CD4-positive, alpha-beta T cell (primary cell): ENCODE measurements at regions of chr13 and their contacts with region 1.

Region 1: GRCh38 chr13:36818804-36819738 is at the start of gene RFXAP:
- DNase-seq: peak; percentile 83 to 96 (median 90)
- ATAC-seq: peak; percentile 89
- H3K4me3 ChIP-seq: peak within 1 kb of the TSS; percentile 83
- H3K4me3 Mint-ChIP-seq: peak within 1 kb of the TSS; percentile 89
- H3K27ac ChIP-seq: peak within 1 kb of the TSS; percentile 38 to 53
- H3K27ac Mint-ChIP-seq: peak within 1 kb of the TSS; percentile 90
- H3K4me1 ChIP-seq: peaks cover 29% of the 10 kb centered on the region
- H3K4me1 Mint-ChIP-seq: peaks cover 56% of the 10 kb centered on the region
- H3K27me3 ChIP-seq: no peaks in the 10 kb centered on the region
- H3K27me3 Mint-ChIP-seq: peaks cover 7% of the 10 kb centered on the region
- CTCF ChIP-seq: peak; percentile 28
- total RNA-seq, gene RFXAP: 5.8 to 6.0 TPM

Region 2: DNA sequence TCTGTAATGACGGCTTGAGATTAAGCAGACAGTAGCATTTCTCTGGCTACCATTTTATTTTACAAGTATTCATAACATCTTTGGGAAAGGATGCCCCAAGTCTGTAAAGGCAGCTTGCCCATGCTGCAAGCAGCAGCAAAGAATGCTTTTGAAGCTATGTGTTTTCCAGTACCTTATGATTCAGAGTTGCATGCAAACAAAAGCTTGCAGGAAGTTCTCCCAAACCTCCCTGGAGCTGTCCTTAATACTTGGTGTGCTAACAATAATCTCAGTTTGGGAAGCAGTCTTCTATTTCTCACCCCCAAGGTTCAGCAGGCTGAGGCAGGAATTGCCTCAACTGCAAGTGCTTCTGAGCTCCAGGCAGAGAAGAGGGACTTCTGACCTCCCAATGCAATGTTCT is 326.0 kb before region 1 on chr13:
- CTCF ChIA-PET with region 1: no interaction called
- POLR2A ChIA-PET with region 1: no interaction called
- intact Hi-C with region 1: no loop called
- DNase-seq: no peak
- ATAC-seq: no peak
- H3K4me3 ChIP-seq: no peak overlapping the region
- H3K4me3 Mint-ChIP-seq: no peak overlapping the region
- H3K27ac ChIP-seq: no peak overlapping the region
- H3K27ac Mint-ChIP-seq: no peak overlapping the region
- H3K4me1 ChIP-seq: no peaks in the 10 kb centered on the region
- H3K4me1 Mint-ChIP-seq: no peaks in the 10 kb centered on the region
- H3K27me3 ChIP-seq: no peaks in the 10 kb centered on the region
- H3K27me3 Mint-ChIP-seq: peaks cover 12% of the 10 kb centered on the region
- CTCF ChIP-seq: no peak

Region 3: GRCh38 chr13:37058910-37059847 is 240.1 kb after region 1 on chr13 and contains the start of gene SUPT20H:
- CTCF ChIA-PET with region 1: no interaction called
- POLR2A ChIA-PET with region 1: interaction called, 3 read pairs
- intact Hi-C with region 1: loop called (anchors 5 to 10 kb)
- DNase-seq: peak; percentile 89 to 96 (median 94)
- ATAC-seq: peak; percentile 91
- H3K4me3 ChIP-seq: peak within 1 kb of the TSS; percentile 96
- H3K4me3 Mint-ChIP-seq: peak within 1 kb of the TSS; percentile 95
- H3K27ac ChIP-seq: peak within 1 kb of the TSS; percentile 93
- H3K27ac Mint-ChIP-seq: peak within 1 kb of the TSS; percentile 99
- H3K4me1 ChIP-seq: peaks cover 16% of the 10 kb centered on the region
- H3K4me1 Mint-ChIP-seq: peaks cover 43% of the 10 kb centered on the region
- H3K27me3 ChIP-seq: no peaks in the 10 kb centered on the region
- H3K27me3 Mint-ChIP-seq: no peaks in the 10 kb centered on the region
- CTCF ChIP-seq: no peak
- total RNA-seq, gene SUPT20H: 61.7 to 63.1 TPM

Region 4: GRCh38 chr13:37306778-37307544 is 487.9 kb after region 1 on chr13:
- CTCF ChIA-PET with region 1: no interaction called
- POLR2A ChIA-PET with region 1: no interaction called
- intact Hi-C with region 1: no loop called
- DNase-seq: no peak
- ATAC-seq: no peak
- H3K4me3 ChIP-seq: no peak overlapping the region
- H3K4me3 Mint-ChIP-seq: no peak overlapping the region
- H3K27ac ChIP-seq: no peak overlapping the region
- H3K27ac Mint-ChIP-seq: no peak overlapping the region
- H3K4me1 ChIP-seq: no peaks in the 10 kb centered on the region
- H3K4me1 Mint-ChIP-seq: no peaks in the 10 kb centered on the region
- H3K27me3 ChIP-seq: no peaks in the 10 kb centered on the region
- H3K27me3 Mint-ChIP-seq: no peaks in the 10 kb centered on the region
- CTCF ChIP-seq: no peak